CD4-positive, alpha-beta memory T cell (primary cell): ENCODE measurements at regions of chr2 and their contacts with region 1.

Region 1: DNA sequence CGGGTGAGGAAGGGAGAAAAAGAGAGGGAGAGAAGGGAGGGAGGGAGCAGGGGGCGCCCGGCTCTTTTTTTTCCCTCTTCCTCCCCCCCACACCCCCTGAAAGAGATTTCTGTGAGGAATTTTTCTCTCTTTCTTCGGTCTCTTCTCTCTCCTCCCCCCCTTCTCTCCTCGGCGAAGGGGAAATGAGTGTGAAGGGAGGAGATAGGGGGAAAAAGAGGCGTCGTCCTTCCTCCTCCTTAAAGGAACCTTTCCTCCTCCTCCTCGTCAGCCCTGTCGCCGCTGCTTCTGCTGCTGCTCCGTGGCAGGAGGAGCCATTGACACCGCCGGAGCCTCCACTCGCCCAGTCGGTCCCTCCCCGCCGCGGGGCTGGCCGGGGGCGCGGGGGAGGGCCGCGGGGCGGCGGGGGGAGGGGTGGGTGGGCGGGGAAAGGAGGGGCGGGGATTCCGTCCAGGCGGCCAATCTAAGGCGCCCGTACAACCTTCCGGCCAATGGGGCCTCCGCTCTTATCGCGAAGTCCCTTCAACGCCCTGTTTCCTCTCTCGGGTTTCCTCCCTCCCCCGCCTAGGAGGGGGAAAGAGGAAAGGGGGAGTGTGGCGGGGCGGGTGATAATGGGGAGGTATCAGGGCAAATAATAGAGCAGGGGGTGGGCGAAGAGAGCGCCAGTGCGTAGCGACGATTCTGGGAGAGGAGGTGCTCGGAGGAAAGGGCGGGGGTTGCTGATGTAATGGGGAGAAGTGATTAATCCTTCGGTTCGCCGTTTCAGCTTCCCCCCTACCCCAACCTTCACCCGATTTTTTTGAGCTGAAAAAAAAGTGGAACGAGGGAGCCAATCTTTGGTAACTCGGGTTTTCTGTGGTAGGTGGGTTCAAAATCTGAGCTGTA is at the start of gene FBXO11:
- DNase-seq: peak; percentile 97 to 99 (median 98)
- H3K4me3 ChIP-seq: peak within 1 kb of the TSS; percentile 63 to 76
- H3K4me3 Mint-ChIP-seq: peak within 1 kb of the TSS; percentile 78 to 94 (median 90)
- H3K27ac ChIP-seq: peak within 1 kb of the TSS; percentile 91
- H3K27ac Mint-ChIP-seq: peak within 1 kb of the TSS; percentile 87 to 99 (median 97)
- H3K4me1 ChIP-seq: peaks cover 38% of the 10 kb centered on the region
- H3K4me1 Mint-ChIP-seq: peaks cover 29 to 62% (median 41%) of the 10 kb centered on the region in 4 donors
- H3K27me3 ChIP-seq: no peaks in the 10 kb centered on the region
- H3K27me3 Mint-ChIP-seq: peaks cover 0 to 2% of the 10 kb centered on the region in 2 donors
- total RNA-seq, gene FBXO11: 85.6 to 87.3 TPM

Region 2: GRCh38 chr2:46915811-46916630 is 990.4 kb before region 1 on chr2:
- CTCF ChIA-PET with region 1: no interaction called
- POLR2A ChIA-PET with region 1: no interaction called
- intact Hi-C with region 1: loop called (anchors 10 kb)
- DNase-seq: peak; percentile 83 to 91 (median 88)
- H3K4me3 ChIP-seq: peak overlapping the region; percentile 70 to 85
- H3K4me3 Mint-ChIP-seq: peak overlapping the region; percentile 88 to 98 (median 92)
- H3K27ac ChIP-seq: peak overlapping the region; percentile 82
- H3K27ac Mint-ChIP-seq: peak overlapping the region; percentile 81 to 99 (median 95)
- H3K4me1 ChIP-seq: peaks cover 43% of the 10 kb centered on the region
- H3K4me1 Mint-ChIP-seq: peaks cover 35 to 56% (median 48%) of the 10 kb centered on the region in 4 donors
- H3K27me3 ChIP-seq: no peaks in the 10 kb centered on the region
- H3K27me3 Mint-ChIP-seq: no peaks in the 10 kb centered on the region

Region 3: DNA sequence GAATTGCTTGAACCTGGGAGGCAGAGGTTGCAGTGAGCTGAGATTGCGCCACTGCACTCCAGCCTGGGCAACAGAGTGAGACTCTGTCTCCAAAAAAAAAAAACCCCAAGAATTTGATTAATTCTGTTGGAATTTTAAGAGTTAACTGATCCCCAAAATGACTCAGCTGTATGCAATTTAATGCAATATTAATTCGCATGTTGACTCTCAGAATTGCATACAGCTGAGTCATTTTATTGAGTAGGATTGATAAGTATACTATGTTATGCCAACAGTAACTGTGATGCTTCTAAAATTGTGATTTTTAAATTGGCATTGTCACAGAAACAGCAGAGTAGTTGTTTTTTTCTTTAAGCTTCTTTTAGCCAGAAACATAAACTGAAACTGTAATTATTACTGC is 483.8 kb before region 1 on chr2:
- CTCF ChIA-PET with region 1: no interaction called
- POLR2A ChIA-PET with region 1: no interaction called
- intact Hi-C with region 1: no loop called
- DNase-seq: no peak
- H3K4me3 ChIP-seq: no peak overlapping the region
- H3K4me3 Mint-ChIP-seq: no peak overlapping the region
- H3K27ac ChIP-seq: no peak overlapping the region
- H3K27ac Mint-ChIP-seq: no peak overlapping the region
- H3K4me1 ChIP-seq: no peaks in the 10 kb centered on the region
- H3K4me1 Mint-ChIP-seq: no peaks in the 10 kb centered on the region
- H3K27me3 ChIP-seq: no peaks in the 10 kb centered on the region
- H3K27me3 Mint-ChIP-seq: no peaks in the 10 kb centered on the region

Region 4: DNA sequence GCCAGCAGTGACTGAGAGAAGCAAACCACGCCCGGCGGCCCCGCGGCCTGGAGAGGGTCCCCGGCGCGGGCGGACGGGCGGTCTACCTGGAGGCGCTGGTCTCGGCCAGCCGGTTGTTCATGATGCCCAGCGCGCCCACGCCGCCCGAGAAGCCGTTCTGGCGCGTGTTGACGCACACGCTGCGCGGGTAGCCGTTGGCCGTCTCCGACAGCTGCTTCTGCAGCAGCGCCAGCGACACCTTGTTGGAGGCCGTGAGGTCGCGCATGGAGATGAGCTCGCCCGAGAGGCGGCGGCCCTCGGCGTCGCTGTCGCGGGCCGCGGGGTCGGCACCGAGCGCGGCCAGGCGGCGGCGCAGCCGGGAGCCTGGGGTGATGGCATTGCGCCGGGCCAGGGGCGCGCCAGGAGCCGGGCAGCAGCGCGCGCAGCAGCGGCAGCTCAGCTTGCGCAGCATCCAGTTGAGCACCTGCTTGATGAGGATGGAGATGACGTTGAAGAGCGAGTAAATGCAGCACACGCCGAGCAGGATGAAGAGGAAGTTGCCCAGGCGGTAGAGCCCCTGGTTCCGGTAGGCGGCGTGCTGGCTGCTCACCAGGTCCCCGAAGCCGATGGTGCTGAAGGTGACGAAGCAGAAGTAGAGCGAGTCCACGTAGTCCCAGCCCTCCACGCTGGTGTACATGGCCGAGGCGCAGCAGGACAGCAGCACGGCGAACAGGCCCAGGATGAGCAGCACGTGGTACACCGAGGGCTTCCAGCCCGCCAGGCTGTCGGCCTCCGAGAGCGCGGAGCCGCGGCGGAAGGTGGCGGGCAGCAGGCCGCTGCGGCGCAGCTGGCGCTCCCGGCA is 385.4 kb before region 1 on chr2:
- CTCF ChIA-PET with region 1: no interaction called
- POLR2A ChIA-PET with region 1: interaction called, 3 read pairs
- intact Hi-C with region 1: loop called (anchors 5 kb)
- DNase-seq: peak; percentile 72 to 80 (median 78)
- H3K4me3 ChIP-seq: peak overlapping the region; percentile 23 to 81
- H3K4me3 Mint-ChIP-seq: peak overlapping the region; percentile 92 to 96 (median 94)
- H3K27ac ChIP-seq: peak overlapping the region; percentile 23
- H3K27ac Mint-ChIP-seq: peak overlapping the region; percentile 59 to 97 (median 93)
- H3K4me1 ChIP-seq: peaks cover 18% of the 10 kb centered on the region
- H3K4me1 Mint-ChIP-seq: peaks cover 10 to 31% (median 18%) of the 10 kb centered on the region in 4 donors
- H3K27me3 ChIP-seq: no peaks in the 10 kb centered on the region
- H3K27me3 Mint-ChIP-seq: peaks cover 0 to 1% of the 10 kb centered on the region in 2 donors

Region 5: GRCh38 chr2:47867205-47867604 is 39.2 kb before region 1 on chr2:
- CTCF ChIA-PET with region 1: interaction called, 6 read pairs
- POLR2A ChIA-PET with region 1: interaction called, 7 read pairs
- intact Hi-C with region 1: loop called (anchors 2 kb)
- DNase-seq: no peak
- H3K4me3 ChIP-seq: no peak overlapping the region
- H3K4me3 Mint-ChIP-seq: peak overlapping the region in 4 of 8 donors; percentile 13 to 64 (median 38)
- H3K27ac ChIP-seq: no peak overlapping the region
- H3K27ac Mint-ChIP-seq: peak overlapping the region in 4 of 7 donors; percentile 2 to 85 (median 42)
- H3K4me1 ChIP-seq: peaks cover 93% of the 10 kb centered on the region
- H3K4me1 Mint-ChIP-seq: peaks cover 60 to 90% (median 75%) of the 10 kb centered on the region in 4 donors
- H3K27me3 ChIP-seq: no peaks in the 10 kb centered on the region
- H3K27me3 Mint-ChIP-seq: no peaks in the 10 kb centered on the region

Region 6: DNA sequence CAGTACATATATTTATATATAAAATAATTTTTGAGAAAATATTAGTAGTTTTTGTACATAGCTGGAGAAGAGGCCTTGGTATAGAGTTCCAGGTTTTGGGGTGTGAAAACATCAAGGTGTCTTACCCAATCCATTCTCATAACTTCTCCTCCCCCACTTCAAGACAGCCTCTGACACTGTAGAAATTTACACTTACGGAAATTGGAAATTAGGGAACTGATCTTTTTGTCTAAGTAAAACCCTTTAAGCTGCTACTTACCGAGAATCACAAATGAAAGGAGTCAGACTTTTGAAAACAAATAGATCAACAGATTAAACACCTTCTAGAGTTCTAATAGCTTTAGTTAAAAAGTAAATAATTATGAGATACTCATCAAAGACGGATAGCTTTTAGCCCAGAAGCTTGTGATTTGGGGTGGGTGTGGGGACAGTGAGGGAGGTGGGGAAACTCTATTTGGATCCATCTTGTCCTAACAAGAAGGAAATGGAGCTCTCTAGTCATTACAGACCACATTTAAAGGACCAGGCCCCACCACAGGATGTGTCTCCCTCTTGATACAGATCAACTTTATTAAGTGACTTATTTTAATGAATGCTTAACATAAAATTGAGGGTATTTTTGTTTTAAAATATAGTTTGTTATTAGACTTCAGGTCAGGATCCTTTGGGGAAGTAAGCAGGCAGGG is 11.0 kb after region 1 on chr2:
- CTCF ChIA-PET with region 1: interaction called, 10 read pairs
- POLR2A ChIA-PET with region 1: interaction called, 3 read pairs
- intact Hi-C with region 1: no loop called
- DNase-seq: no peak
- H3K4me3 ChIP-seq: no peak overlapping the region
- H3K4me3 Mint-ChIP-seq: no peak overlapping the region
- H3K27ac ChIP-seq: no peak overlapping the region
- H3K27ac Mint-ChIP-seq: no peak overlapping the region
- H3K4me1 ChIP-seq: no peaks in the 10 kb centered on the region
- H3K4me1 Mint-ChIP-seq: peaks cover 0 to 5% (median 2%) of the 10 kb centered on the region in 4 donors
- H3K27me3 ChIP-seq: no peaks in the 10 kb centered on the region
- H3K27me3 Mint-ChIP-seq: no peaks in the 10 kb centered on the region

Region 7: GRCh38 chr2:48107326-48107925 is 201.0 kb after region 1 on chr2:
- CTCF ChIA-PET with region 1: interaction called, 6 read pairs
- POLR2A ChIA-PET with region 1: interaction called, 5 read pairs
- intact Hi-C with region 1: loop called (anchors 1 kb)
- DNase-seq: no peak
- H3K4me3 ChIP-seq: no peak overlapping the region
- H3K4me3 Mint-ChIP-seq: no peak overlapping the region
- H3K27ac ChIP-seq: no peak overlapping the region
- H3K27ac Mint-ChIP-seq: peak overlapping the region in 1 of 7 donors; percentile 71
- H3K4me1 ChIP-seq: peaks cover 20% of the 10 kb centered on the region
- H3K4me1 Mint-ChIP-seq: peaks cover 9 to 25% (median 17%) of the 10 kb centered on the region in 4 donors
- H3K27me3 ChIP-seq: no peaks in the 10 kb centered on the region
- H3K27me3 Mint-ChIP-seq: peaks cover 0 to 2% of the 10 kb centered on the region in 2 donors